SK-N-SH (cell line): ENCODE measurements at regions of chr2 and their contacts with region 1.

Region 1: GRCh38 chr2:43312755-43313641 is 86.6 kb upstream of the ZFP36L2 start:
- DNase-seq: peak; percentile 49
- H3K4me3 ChIP-seq: no peak overlapping the region
- H3K27ac ChIP-seq: peak overlapping the region; percentile 47 to 98; a peak in 3 of 4 replicates
- H3K4me1 ChIP-seq: peaks cover 10 to 22% of the 10 kb centered on the region in 2 experiments
- H3K27me3 ChIP-seq: no peaks in the 10 kb centered on the region
- CTCF ChIP-seq: no peak
- EP300 ChIP-seq: peak; percentile 72 to 92
- RAD21 ChIP-seq: peak; percentile 16

Region 2: DNA sequence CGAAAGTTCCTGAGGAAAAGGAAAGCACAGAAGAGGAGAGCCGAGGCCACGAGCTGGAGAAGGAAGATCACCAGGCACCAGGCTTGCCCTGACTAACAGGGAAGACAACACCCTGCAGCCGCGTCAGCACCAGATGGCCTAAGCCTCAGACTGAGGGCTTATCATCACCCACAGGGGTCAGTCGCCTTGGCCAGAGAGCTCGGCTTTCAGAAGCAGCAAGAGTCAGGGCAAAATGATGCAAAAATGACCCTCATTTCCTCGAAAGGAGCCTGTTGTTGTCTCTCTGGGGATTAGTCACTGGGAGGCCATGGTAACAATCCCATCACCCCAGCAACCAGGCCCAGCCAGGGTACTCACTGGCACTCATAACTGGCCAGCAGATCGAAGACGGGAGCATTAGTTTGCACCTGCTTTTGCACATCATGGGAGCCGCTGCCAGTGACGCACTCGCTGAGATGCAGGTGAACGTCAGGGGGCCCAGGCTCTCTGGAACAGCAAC is 43.9 kb before region 1 on chr2:
- CTCF ChIA-PET with region 1: interaction called, 16 read pairs
- POLR2A ChIA-PET with region 1: interaction called, 14 read pairs
- DNase-seq: peak; percentile 77
- H3K4me3 ChIP-seq: no peak overlapping the region
- H3K27ac ChIP-seq: peak overlapping the region; percentile 54 to 99
- H3K4me1 ChIP-seq: peaks cover 31 to 73% of the 10 kb centered on the region in 2 experiments
- H3K27me3 ChIP-seq: no peaks in the 10 kb centered on the region
- CTCF ChIP-seq: peak; percentile 38; the same call in 1 of the 2 replicates
- EP300 ChIP-seq: peak; percentile 60 to 73; a peak in 2 of 4 replicates
- RAD21 ChIP-seq: peak; percentile 47

Region 3: DNA sequence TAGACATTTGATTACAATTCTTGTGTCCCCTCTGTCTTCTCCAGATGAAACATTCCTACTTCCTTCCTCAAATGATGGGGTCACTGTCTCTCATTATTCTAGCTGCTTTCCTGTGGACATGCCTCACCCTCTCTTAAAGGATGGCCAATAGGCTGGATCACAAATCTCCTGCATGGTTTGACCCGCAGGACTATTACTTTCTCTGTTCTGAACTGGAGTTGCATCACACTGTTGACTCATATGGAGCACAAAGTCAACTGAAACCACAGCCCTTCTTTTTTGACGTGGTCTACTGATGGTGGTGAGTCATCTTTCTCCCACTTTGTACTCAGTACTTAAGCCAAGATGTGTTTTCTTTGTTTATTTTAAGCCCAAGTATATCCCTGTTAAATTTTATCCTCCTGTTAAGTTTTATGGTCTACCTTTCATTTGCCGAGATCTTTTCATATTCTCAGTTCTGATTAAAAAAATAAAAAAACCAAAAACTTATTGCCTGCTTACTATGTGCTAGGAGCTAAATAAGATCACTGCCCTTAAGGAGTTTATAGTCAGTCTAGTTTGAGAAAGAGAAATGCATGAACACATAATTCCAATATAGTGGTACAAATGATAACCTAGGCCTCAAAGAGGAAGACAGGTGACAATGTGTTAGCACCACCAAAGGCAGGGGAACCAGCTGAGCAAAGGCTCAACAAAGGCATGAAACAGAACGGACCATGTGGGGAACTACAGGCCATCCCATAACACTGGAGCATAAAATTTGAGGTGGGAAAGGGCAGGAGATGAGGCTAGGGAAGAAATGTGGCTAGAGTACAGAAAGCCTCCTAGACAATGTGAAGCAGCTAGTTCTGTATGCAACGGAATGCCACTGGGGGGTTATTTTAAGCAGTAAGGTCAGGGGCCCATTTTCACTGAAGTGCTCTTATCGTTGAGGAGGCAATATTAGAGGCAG is 19.0 kb before region 1 on chr2:
- CTCF ChIA-PET with region 1: no interaction called
- POLR2A ChIA-PET with region 1: no interaction called
- DNase-seq: no peak
- H3K4me3 ChIP-seq: no peak overlapping the region
- H3K27ac ChIP-seq: peak overlapping the region in 1 of 2 experiments; percentile 85; a peak in 2 of 4 replicates
- H3K4me1 ChIP-seq: peaks cover 6% of the 10 kb centered on the region in 2 experiments; a peak in 2 of 4 replicates
- H3K27me3 ChIP-seq: no peaks in the 10 kb centered on the region
- CTCF ChIP-seq: no peak
- EP300 ChIP-seq: peak in 1 of 2 experiments; percentile 82; a peak in 1 of 4 replicates
- RAD21 ChIP-seq: no peak